Transverse colon (tissue), 4 donors: ENCODE measurements at regions of chr5 and their contacts with region 1.

Region 1: DNA sequence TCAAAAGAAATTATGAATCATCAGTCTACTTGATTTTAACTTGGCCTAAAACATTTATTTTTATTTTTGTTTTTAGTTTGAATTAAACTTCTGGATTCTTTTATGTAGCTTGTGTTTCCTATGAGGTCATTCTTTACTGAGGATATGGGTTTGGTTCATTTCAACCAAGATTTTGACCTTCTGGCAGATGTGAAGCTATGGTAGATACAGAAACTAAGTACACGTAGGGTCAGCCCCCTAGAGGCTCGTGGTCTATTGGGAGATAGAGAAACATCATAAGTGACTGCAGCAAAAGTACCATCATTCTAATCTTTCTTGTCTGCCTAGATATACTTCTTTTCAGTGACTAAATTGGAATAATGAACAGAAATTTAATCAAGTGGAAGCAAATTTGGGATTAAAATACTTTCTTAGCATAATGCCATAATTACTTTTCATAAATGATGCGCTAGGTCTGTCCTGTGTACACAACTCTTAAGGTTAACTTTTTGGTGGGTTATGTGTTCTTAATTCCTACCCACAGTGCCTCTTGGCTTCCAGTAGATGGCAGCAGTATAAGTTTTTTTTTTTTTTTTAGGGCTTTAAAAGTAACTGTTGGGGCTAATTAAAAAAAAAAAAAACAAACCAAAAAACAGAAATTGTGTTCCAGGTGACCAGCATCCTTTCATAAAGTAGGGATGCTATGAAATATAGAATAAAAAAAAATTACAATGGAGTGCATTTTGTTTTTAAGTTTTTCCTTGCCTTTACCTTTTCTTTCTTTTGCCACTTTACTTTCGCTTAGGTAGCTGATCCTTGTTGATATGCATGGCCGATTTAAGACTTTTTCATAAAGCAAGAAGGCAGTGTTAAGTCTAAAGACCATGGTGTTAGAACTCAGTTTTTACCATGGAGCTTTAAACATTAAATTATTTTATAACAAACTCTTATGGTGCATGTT is 49.9 kb downstream of the LRRTM2 start:
- DNase-seq: no peak
- H3K4me3 ChIP-seq: no peak overlapping the region
- H3K27ac ChIP-seq: no peak overlapping the region
- H3K4me1 ChIP-seq: peaks cover 0 to 6% (median 0%) of the 10 kb centered on the region in 4 donors
- H3K27me3 ChIP-seq: no peaks in the 10 kb centered on the region
- CTCF ChIP-seq: peak; percentile 28 to 57 (median 54)
- EP300 ChIP-seq: no peak
- POLR2A ChIP-seq: no peak

Region 2: DNA sequence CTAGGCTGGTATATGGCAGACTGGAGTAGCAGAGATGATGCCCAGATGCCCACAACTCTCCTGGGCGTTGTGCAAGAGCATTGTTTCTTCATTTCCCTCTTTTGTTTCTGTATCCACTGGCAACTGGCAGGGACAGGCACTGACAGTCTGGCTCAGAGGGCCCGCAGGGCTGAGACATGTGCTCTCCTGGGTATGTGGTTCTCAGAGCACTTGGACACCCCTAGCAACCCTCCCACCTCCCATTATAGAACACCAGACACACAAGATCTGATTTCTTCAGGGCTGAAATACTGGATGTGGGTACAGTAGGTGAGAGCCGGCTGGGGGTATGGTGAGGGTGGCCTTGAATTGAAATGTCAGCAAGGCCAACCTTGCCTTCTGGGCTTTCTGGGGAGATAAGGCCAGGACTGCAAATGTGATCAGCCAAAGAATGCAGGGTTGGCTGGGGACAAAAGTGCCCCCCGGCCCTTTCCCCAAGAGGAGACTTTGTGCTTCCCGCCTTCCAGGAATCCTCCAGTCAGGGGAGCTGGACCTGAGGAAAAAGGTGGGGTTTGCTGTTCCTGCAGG is 100.6 kb before region 1 on chr5:
- in situ Hi-C with region 1: no loop called
- intact Hi-C with region 1: no loop called
- DNase-seq: no peak
- H3K4me3 ChIP-seq: no peak overlapping the region
- H3K27ac ChIP-seq: peak overlapping the region; percentile 7 to 74 (median 43)
- H3K4me1 ChIP-seq: peaks cover 0 to 8% (median 5%) of the 10 kb centered on the region in 4 donors
- H3K27me3 ChIP-seq: no peaks in the 10 kb centered on the region
- CTCF ChIP-seq: no peak
- EP300 ChIP-seq: no peak
- POLR2A ChIP-seq: no peak

Region 3: DNA sequence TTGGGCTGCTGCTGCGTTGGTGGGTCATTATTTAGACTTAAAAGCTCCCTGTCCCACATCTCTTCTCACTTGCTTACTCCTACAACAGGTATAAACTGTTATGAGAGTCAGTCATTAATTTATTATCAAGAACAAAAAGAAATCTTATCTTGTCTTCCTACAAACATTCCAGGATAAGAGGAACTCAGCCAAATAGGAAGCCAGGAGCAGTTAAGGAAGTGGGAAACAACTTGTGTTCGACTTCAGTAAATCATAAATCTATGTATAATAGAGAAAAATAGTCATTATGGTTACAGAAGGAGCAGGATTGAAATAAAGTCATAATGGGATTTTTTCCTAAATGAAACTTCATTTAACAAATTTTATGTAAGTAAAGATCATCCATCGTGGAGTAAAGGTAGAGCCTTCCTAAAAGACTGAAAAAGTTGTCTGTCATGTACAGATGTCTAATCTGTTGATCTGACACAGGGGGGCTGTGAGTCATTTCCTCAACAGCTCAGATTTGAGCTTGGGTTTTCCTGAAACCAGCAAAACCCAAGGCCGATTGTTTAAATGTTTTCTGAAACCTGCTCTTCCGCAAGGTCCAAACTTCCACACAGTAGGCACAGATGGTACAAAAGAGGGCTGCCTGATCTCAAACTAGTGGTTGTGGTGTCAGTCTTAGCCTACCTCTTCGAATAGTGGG is 75.2 kb after region 1 on chr5:
- in situ Hi-C with region 1: no loop called
- intact Hi-C with region 1: no loop called
- DNase-seq: no peak
- H3K4me3 ChIP-seq: no peak overlapping the region
- H3K27ac ChIP-seq: no peak overlapping the region
- H3K4me1 ChIP-seq: peaks cover 0 to 10% (median 3%) of the 10 kb centered on the region in 4 donors
- H3K27me3 ChIP-seq: no peaks in the 10 kb centered on the region
- CTCF ChIP-seq: no peak
- EP300 ChIP-seq: no peak
- POLR2A ChIP-seq: no peak

Region 4: GRCh38 chr5:139262742-139263445 is 437.7 kb after region 1 on chr5:
- in situ Hi-C with region 1: loop called in 2 of 4 experiments (anchors 10 kb)
- intact Hi-C with region 1: no loop called
- DNase-seq: peak; percentile 83
- H3K4me3 ChIP-seq: no peak overlapping the region
- H3K27ac ChIP-seq: peak overlapping the region in 2 of 4 donors; percentile 7 to 23
- H3K4me1 ChIP-seq: peaks cover 0 to 12% (median 3%) of the 10 kb centered on the region in 4 donors
- H3K27me3 ChIP-seq: no peaks in the 10 kb centered on the region
- CTCF ChIP-seq: peak; percentile 74 to 87 (median 79)
- EP300 ChIP-seq: no peak
- POLR2A ChIP-seq: no peak

Region 5: GRCh38 chr5:139828207-139828895 is 1003.2 kb after region 1 on chr5:
- in situ Hi-C with region 1: no loop called
- intact Hi-C with region 1: no loop called
- DNase-seq: no peak
- H3K4me3 ChIP-seq: no peak overlapping the region
- H3K27ac ChIP-seq: no peak overlapping the region
- H3K4me1 ChIP-seq: no peaks in the 10 kb centered on the region
- H3K27me3 ChIP-seq: peaks cover 3% of the 10 kb centered on the region
- CTCF ChIP-seq: no peak
- EP300 ChIP-seq: no peak
- POLR2A ChIP-seq: no peak

Region 6: GRCh38 chr5:140497897-140498296 is 1672.7 kb after region 1 on chr5:
- in situ Hi-C with region 1: no loop called
- intact Hi-C with region 1: no loop called
- DNase-seq: no peak
- H3K4me3 ChIP-seq: no peak overlapping the region
- H3K27ac ChIP-seq: no peak overlapping the region
- H3K4me1 ChIP-seq: no peaks in the 10 kb centered on the region
- H3K27me3 ChIP-seq: no peaks in the 10 kb centered on the region
- CTCF ChIP-seq: no peak
- EP300 ChIP-seq: no peak
- POLR2A ChIP-seq: no peak